ENCODE measurements at regions of chr3 and their contacts with region 1.

Region 1: GRCh38 chr3:100032243-100032642 is 82.1 kb downstream of the FILIP1L start:
- DNase-seq: no peak
- ATAC-seq: peak in 4 of 8 donors; percentile 38 to 45 (median 44)
- H3K4me3 ChIP-seq: no peak overlapping the region
- H3K27ac ChIP-seq: peak overlapping the region in 1 of 10 donors; percentile 17
- H3K4me1 ChIP-seq: peaks cover 0 to 17% (median 11%) of the 10 kb centered on the region in 9 donors
- H3K27me3 ChIP-seq: no peaks in the 10 kb centered on the region
- CTCF ChIP-seq: no peak

Region 2: GRCh38 chr3:99929745-99930139 is 102.5 kb before region 1 on chr3:
- intact Hi-C with region 1: loop called in 1 of 10 experiments (anchors 10 kb)
- DNase-seq: peak; percentile 23 to 43
- ATAC-seq: peak in 6 of 8 donors; percentile 26 to 51 (median 38)
- H3K4me3 ChIP-seq: no peak overlapping the region
- H3K27ac ChIP-seq: peak overlapping the region in 9 of 10 donors; percentile 11 to 76 (median 54)
- H3K4me1 ChIP-seq: peaks cover 10 to 64% (median 37%) of the 10 kb centered on the region in 9 donors
- H3K27me3 ChIP-seq: no peaks in the 10 kb centered on the region
- CTCF ChIP-seq: no peak

Region 3: DNA sequence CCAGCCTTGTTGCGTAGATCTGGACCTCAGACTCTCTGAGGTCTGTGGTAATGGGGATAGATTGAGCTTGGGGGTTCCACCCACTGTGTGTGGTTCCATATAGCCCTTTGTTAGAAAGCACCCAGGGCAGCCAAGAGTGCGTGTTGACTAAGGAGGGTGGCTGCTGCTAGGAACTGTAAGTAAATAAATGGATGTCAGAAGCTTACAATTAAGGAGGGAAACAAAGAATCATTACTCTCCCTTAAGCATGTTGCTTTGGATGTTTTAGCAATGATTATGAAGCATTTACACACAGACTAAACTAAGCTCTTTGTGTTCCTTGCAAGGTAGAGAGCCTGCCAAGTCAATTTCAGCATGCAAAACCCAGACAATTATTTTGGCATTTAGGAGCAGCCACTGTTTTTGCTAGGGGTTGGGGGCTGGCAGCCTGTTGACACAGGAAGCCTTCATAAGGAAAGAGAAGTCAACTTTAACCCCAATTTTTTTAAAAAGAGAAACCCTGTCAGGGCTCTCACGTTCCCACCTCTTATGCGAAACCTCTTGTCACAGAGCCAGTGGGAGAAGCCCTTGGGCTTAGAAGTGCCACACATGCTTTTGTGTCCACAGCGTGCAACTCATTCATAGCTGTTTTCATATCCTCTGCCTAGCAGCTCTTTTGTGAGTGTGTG is 86.8 kb before region 1 on chr3:
- intact Hi-C with region 1: loop called in 1 of 10 experiments (anchors 10 kb)
- DNase-seq: peak in 1 of 2 donors; percentile 38
- ATAC-seq: peak; percentile 24 to 74 (median 66)
- H3K4me3 ChIP-seq: peak overlapping the region in 1 of 10 donors; percentile 14
- H3K27ac ChIP-seq: peak overlapping the region in 7 of 10 donors; percentile 10 to 76 (median 40)
- H3K4me1 ChIP-seq: peaks cover 9 to 52% (median 41%) of the 10 kb centered on the region in 9 donors
- H3K27me3 ChIP-seq: no peaks in the 10 kb centered on the region
- CTCF ChIP-seq: no peak

Region 4: GRCh38 chr3:100352296-100353231 is 320.3 kb after region 1 on chr3:
- intact Hi-C with region 1: no loop called
- DNase-seq: no peak
- ATAC-seq: peak in 2 of 8 donors; percentile 39 to 42
- H3K4me3 ChIP-seq: no peak overlapping the region
- H3K27ac ChIP-seq: no peak overlapping the region
- H3K4me1 ChIP-seq: no peaks in the 10 kb centered on the region
- H3K27me3 ChIP-seq: no peaks in the 10 kb centered on the region
- CTCF ChIP-seq: no peak

Measured in heart right ventricle (tissue), 16 donors.